ACHN (cell line): ENCODE measurements at regions of chr17 and their contacts with region 1.

Region 1: GRCh38 chr17:78013683-78014467 is 55.4 kb downstream of the TNRC6C start:
- DNase-seq: peak; percentile 64

Region 2: DNA sequence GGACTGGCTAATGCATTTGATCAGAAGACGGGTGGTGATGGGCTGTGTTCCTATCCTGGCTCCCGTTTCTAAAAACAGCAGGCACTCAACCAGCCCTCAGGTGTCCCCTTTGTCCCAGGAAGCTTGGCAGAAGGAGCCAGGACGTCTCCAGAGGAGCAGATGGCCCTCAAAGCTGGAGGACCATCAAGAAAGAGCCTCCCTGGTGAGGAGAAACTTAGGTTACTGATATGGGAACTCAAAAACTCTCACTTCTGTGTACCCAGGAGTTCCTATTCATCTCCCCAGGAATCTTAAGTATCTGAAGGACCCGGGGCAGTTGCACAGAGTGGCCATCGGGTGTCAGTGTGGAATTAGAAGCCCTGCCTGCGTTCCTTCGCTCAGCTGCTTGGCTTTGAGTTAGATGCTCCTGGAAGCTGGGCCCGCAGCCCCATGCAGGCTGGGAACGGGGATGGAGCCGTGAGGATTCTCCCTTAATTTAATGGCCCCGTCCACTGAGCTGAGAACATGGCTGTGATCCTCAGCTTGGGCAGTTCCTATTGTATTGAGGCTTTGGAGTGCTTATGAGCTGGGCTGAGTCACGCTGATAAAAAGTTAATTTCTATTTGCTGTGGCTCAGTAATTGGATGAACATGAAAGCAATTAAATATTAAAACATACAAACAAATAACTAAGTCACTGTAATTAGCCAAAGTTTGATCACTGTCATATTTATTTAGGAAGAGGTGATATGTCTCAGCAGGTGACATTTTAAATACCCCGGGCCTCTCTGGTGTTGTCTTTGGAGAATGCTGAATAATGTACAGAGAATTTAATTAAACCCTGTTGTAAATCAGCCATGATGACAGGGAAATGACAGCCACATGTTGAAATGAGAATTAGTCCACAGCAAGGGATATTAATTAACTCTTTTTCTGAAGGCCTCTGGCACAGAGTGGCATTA is 471.1 kb before region 1 on chr17:
- in situ Hi-C with region 1: loop called (anchors 25 kb)
- DNase-seq: peak; percentile 80

Region 3: DNA sequence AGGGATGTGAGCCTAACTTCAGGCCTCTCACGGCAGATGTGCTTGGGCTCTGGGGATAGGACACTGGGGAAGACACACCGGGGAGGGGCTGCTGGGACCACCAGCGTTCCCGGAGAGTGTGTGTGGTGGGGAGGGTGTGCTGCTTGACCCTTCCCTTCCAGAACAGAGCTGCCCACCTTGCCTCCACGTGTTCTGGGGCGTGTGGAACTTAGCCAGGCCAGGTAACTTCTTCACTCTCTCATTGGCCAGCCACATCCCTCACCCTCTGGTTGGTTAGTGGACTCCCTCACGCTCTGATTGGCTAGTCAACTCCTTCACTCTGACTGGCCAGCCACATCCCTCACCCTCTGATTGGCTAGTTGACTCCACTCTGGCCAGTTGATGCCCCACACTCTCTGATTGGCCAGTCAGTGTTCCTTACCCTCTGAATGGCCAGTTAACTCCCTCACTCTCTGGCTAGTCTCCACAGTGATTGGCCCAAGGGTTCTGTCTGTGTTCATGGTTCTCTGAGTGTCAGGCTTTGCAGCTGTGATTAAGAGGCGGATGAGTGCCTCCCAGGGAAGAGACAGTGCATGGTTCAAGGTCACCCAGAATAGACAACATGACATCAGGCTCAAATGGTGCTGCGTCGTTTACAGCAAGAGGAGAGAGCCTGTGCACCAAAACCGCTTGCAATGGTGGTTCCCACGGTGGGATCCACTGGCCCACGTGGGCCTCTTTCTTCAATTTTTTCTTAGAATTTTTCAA is 227.6 kb after region 1 on chr17:
- in situ Hi-C with region 1: no loop called
- DNase-seq: peak; percentile 62